Activated CD4-positive, alpha-beta memory T cell treated with anti-CD3 and anti-CD28 coated beads for 36 hours (primary cell): ENCODE measurements at regions of chr3 and their contacts with region 1.

Region 1: DNA sequence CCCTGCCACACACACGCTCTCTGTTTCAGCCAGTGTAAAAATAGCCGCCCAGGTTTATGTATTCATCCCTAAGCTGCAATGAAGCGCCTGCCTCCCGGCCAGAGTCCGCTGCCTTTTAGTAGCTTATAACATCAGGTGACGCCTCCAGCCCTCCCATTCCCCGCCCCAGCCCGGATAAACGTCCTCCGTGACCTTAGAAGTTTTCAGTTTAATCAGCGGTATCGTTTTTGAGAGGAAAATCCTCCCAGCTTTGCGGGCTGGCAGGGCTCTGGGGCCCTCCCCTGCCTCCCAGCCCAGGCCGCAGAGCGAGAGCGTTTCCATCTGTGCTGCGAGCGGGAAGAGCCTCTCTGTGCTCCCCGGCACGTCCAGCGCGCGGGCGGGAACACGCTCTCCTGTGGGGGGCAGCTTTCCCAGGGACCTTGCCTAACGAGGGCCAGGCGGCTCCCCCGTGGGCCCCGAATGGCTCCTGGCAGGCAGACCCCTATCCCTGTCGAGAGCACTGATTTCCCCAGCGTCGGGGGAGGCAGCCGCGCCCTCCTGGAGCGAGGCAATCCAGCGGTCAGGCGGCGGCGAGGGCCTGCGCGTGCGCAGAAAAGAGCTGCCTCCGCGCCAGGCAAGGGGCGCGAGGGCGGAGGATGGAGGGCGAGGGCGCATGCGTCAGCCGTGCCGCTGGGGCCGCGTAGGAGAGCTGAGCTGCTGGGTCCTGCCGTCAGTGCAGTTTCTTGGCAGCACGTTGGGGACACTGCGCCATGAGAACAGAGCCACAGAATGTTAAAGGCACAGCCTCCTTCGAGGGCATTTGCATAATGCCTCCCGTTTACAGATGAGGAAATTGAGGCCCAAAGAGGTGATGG is 71.1 kb downstream of the CCNL1 start:
- DNase-seq: peak; percentile 96
- H3K4me3 Mint-ChIP-seq: peak overlapping the region; percentile 72
- H3K27ac Mint-ChIP-seq: peak overlapping the region; percentile 96
- H3K4me1 Mint-ChIP-seq: peaks cover 64% of the 10 kb centered on the region
- H3K27me3 Mint-ChIP-seq: no peaks in the 10 kb centered on the region

Region 2: DNA sequence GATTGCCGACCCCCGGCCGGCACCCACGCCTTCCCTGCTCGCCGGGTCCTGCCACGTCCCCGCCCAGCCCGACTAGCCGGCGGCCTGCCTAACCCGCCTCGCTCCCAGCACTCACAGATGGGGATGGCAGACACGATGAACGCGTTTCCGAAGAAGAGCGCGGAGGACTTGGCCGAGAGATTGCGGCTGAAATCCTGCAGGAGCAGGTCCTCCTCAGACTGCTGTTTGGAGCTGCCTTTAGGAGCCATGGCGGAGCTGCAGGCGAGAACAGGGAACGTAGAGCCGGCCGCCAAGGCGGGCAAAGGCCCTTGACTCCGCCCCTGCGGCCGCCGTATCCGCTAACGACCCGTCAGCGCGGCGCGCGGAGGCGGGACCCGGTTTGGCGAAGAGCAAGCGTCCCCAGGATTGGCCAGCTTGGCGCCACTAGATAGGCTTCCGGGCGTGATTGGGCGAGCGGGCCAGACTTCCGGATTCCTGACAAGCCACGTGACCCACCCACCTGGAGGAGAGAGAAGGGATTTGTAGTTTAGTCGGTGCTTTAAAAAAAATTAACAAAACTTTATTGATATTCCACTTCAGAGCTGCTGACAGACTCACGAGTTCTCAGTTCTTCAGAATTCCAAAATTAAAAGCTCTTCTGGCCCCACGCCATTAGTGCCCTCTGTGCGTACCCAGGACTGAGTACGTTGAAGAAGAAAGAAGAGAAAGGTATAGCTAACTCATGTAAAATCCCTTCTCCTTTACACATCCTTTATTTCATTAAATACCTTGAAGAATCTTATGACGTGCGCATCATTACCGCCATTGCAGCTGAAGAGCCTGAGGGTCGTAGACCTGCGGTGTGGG is 533.8 kb before region 1 on chr3 and contains the start of gene SSR3:
- CTCF ChIA-PET with region 1: interaction called, 5 read pairs
- POLR2A ChIA-PET with region 1: interaction called, 10 read pairs
- intact Hi-C with region 1: loop called (anchors 1 kb)
- DNase-seq: peak; percentile 99
- H3K4me3 Mint-ChIP-seq: peak within 1 kb of the TSS; percentile 97
- H3K27ac Mint-ChIP-seq: peak within 1 kb of the TSS; percentile 88
- H3K4me1 Mint-ChIP-seq: peaks cover 46% of the 10 kb centered on the region
- H3K27me3 Mint-ChIP-seq: no peaks in the 10 kb centered on the region
- total RNA-seq, gene SSR3: 162 to 170 TPM

Region 3: DNA sequence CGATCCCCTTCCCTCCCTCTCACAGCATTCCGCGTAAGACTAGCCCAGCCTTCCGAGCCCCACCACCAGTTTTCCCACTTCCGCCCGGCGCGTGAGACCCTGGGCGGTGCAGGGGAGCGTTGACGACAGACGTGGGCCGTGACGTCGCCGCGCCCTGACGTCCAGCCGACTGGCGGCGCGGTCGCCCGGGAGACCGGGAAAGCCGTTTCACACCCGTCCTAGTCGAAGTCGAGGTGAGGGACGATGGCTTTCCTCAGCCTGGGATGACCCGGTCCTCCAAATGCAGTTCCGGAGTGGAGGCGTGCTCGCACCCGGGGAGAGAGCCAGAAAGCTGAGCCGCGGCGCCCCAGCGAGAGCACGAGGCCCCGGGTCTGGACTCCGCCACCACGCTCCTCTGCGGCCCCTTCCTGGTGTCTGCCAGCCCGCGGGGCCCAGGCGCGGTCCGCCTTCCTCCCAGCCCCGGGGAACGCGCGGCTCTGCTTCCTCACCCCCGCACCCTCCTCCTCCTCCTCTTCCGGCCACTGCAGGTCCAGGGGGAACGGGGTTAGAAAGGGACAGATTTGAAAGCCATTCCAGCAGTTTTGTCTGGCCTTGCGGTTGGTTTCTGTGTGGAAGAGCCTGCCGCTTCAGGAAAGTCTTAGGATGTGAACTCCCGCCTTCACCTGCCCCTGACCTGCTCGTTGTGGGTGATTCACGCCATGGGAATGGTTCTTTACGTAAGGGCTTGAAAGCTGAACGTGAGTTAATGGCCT is 262.5 kb before region 1 on chr3 and contains the start of gene LEKR1:
- CTCF ChIA-PET with region 1: no interaction called
- POLR2A ChIA-PET with region 1: no interaction called
- intact Hi-C with region 1: loop called (anchors 2 kb)
- DNase-seq: peak; percentile 76
- H3K4me3 Mint-ChIP-seq: peak within 1 kb of the TSS; percentile 91
- H3K27ac Mint-ChIP-seq: peak within 1 kb of the TSS; percentile 97
- H3K4me1 Mint-ChIP-seq: peaks cover 21% of the 10 kb centered on the region
- H3K27me3 Mint-ChIP-seq: no peaks in the 10 kb centered on the region
- total RNA-seq, gene LEKR1: 0.56 to 0.59 TPM

Region 4: DNA sequence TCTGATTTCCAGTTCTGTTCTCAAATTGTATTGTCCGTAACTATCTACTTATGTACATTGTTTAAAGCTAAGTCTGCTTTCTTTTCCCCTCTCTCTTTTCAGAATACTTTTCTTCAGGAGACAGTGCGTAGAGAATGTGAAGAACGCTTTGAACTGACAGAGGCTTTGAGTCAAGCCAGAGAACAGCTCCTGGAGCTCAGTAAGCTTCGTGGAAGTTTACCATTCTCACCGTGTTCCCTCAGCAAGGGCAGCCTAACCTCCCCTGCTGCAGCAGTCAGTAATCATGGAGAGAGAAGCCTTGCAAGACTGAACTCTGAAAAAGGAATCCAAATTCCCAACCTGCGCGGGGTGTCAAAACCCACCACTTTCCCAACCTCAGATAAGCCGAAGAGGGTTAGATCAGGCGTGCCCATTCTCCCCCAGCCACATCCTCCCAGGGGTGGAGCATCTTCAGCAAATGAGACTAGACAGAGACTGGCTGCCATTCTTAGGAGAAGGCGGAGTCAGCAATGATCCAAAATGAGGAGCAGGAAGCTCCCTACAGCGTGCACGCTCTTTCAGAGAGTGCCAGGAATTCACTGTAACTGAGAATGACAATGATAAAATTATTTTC is 43.5 kb before region 1 on chr3:
- CTCF ChIA-PET with region 1: no interaction called
- POLR2A ChIA-PET with region 1: no interaction called
- intact Hi-C with region 1: no loop called
- DNase-seq: no peak
- H3K4me3 Mint-ChIP-seq: no peak overlapping the region
- H3K27ac Mint-ChIP-seq: no peak overlapping the region
- H3K4me1 Mint-ChIP-seq: no peaks in the 10 kb centered on the region
- H3K27me3 Mint-ChIP-seq: peaks cover 3% of the 10 kb centered on the region

Region 5: DNA sequence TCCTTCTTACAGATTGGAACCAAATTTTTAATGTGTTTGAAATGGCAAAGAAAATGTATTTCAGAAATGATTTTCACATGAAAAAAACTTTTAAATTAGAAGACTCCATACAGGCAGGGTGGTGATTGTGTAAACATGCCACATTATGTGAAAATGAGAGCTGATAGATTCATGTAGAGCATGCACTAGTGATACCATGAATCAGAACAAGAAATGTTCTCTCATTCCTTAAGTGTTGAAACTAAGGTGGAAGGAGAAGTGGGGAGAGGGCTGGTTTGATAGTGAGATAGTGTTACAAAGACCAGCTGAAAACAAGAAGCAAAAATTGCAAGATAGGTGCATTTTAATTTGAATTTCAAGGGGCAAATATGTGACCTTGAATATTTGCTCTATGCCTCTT is 29.2 kb before region 1 on chr3:
- CTCF ChIA-PET with region 1: no interaction called
- POLR2A ChIA-PET with region 1: no interaction called
- intact Hi-C with region 1: no loop called
- DNase-seq: no peak
- H3K4me3 Mint-ChIP-seq: no peak overlapping the region
- H3K27ac Mint-ChIP-seq: no peak overlapping the region
- H3K4me1 Mint-ChIP-seq: peaks cover 12% of the 10 kb centered on the region
- H3K27me3 Mint-ChIP-seq: peaks cover 4% of the 10 kb centered on the region

Region 6: GRCh38 chr3:157099326-157100095 is 10.7 kb after region 1 on chr3:
- CTCF ChIA-PET with region 1: interaction called, 13 read pairs
- POLR2A ChIA-PET with region 1: interaction called, 12 read pairs
- intact Hi-C with region 1: loop called (anchors 1 kb)
- DNase-seq: no peak
- H3K4me3 Mint-ChIP-seq: no peak overlapping the region
- H3K27ac Mint-ChIP-seq: peak overlapping the region; percentile 63
- H3K4me1 Mint-ChIP-seq: peaks cover 48% of the 10 kb centered on the region
- H3K27me3 Mint-ChIP-seq: no peaks in the 10 kb centered on the region

Region 7: GRCh38 chr3:157104928-157105652 is 16.3 kb after region 1 on chr3:
- CTCF ChIA-PET with region 1: interaction called, 13 read pairs
- POLR2A ChIA-PET with region 1: interaction called, 12 read pairs
- intact Hi-C with region 1: loop called (anchors 1 kb)
- DNase-seq: no peak
- H3K4me3 Mint-ChIP-seq: no peak overlapping the region
- H3K27ac Mint-ChIP-seq: no peak overlapping the region
- H3K4me1 Mint-ChIP-seq: peaks cover 32% of the 10 kb centered on the region
- H3K27me3 Mint-ChIP-seq: no peaks in the 10 kb centered on the region

Region 8: DNA sequence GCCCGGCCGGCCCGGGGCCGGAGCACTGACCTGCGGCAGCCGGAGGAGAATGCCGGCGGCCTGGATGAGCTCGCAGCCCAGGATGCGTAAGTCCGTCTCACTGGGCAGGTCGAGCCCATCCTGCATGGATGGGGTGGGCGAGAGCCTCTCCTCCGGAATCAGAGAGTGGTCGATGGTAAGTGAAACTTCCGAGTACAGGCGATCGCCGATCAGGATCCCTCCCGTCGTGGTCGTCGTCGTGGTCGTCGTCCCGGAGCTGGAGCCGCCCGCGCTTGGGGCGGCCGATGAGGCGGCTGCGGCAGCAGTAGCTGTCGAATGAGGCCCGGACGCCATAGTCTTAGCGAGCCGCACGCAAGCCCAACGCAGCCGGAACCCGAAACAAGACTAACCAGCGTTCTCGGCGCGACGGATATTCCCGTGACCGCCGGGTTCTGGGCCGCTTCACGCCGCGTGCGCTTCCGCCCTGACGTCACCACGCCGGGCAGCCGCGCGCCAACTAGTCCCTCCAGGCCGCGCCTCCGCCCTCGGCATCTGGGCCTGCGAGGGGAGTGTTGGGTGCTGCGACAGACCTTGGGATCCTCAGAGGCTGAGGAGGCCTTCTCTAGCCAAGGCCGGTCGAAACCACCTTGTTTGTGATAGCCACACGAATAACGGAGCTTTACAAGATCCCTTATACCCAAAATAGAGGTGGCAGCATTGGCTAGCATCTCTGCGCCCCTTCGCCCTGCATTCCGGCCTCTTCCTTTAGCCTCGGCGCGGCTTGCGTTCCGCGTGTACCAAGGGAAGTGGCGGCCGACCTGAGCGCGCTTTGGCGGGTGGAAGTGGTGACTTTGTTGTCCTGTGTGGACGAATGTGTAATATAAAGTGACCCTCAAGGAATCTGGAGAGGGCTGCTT is 71.2 kb after region 1 on chr3 and contains the start of gene CCNL1:
- CTCF ChIA-PET with region 1: interaction called, 5 read pairs
- POLR2A ChIA-PET with region 1: interaction called, 23 read pairs
- intact Hi-C with region 1: loop called (anchors 1 kb)
- DNase-seq: peak; percentile 96
- H3K4me3 Mint-ChIP-seq: peak within 1 kb of the TSS; percentile 94
- H3K27ac Mint-ChIP-seq: peak within 1 kb of the TSS; percentile 99
- H3K4me1 Mint-ChIP-seq: peaks cover 46% of the 10 kb centered on the region
- H3K27me3 Mint-ChIP-seq: peaks cover 2% of the 10 kb centered on the region
- total RNA-seq, gene CCNL1: 144 to 150 TPM

Region 9: GRCh38 chr3:157226173-157226847 is 137.5 kb after region 1 on chr3:
- CTCF ChIA-PET with region 1: no interaction called
- POLR2A ChIA-PET with region 1: no interaction called
- intact Hi-C with region 1: loop called (anchors 5 kb)
- DNase-seq: no peak
- H3K4me3 Mint-ChIP-seq: no peak overlapping the region
- H3K27ac Mint-ChIP-seq: no peak overlapping the region
- H3K4me1 Mint-ChIP-seq: peaks cover 7% of the 10 kb centered on the region
- H3K27me3 Mint-ChIP-seq: peaks cover 1% of the 10 kb centered on the region